ENCODE measurements at regions of chr11 and their contacts with region 1.

Region 1: DNA sequence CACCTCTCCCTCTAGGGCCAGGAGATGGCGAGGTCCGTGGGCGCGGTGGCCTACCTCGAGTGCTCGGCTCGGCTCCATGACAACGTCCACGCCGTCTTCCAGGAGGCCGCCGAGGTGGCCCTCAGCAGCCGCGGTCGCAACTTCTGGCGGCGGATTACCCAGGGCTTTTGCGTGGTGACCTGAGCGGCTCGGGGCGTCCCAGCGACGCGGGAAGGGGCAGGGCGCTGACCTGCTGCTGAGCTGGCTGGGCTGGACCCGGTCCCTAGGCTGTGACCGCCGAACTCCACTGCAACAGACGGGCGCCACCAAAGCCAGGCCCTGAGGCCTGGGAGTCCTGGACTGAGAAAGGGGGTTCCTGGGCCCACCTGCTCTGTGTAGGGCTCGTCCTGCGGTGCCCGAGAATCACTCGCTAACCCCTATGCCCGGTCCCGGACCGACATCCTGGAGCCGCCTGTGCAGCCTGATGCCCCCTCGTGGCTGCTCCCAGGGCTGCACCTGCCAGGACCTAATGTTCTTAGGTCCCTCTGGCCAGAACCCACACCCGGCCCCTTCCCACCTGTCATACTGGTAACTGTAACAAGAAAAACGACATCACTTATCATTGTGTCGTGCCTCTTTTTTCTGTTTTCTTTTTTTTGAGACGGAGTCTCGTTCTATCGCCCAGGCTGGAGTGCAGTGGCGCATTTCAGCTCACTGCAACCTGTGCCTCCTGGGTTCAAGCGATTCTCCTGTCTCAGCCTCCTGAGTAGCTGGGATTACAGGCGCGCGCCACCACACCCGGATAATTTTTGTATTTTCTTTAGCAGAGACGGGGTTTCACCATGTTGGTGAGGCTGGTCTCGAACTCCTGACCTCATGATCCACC is 15.0 kb downstream of the RHOD start:
- DNase-seq: no peak
- H3K4me3 ChIP-seq: no peak overlapping the region
- CTCF ChIP-seq: peak; percentile 93

Region 2: GRCh38 chr11:67053896-67054842 is 17.5 kb before region 1 on chr11:
- CTCF ChIA-PET with region 1: interaction called, 57 read pairs
- POLR2A ChIA-PET with region 1: no interaction called
- DNase-seq: no peak
- H3K4me3 ChIP-seq: no peak overlapping the region
- CTCF ChIP-seq: peak; percentile 93

Region 3: GRCh38 chr11:67082035-67082791 is 10.6 kb after region 1 on chr11:
- CTCF ChIA-PET with region 1: interaction called, 34 read pairs
- POLR2A ChIA-PET with region 1: no interaction called
- DNase-seq: no peak
- H3K4me3 ChIP-seq: no peak overlapping the region
- CTCF ChIP-seq: no peak

Region 4: GRCh38 chr11:67213178-67213621 is 141.5 kb after region 1 on chr11:
- CTCF ChIA-PET with region 1: no interaction called
- POLR2A ChIA-PET with region 1: no interaction called
- DNase-seq: no peak
- H3K4me3 ChIP-seq: no peak overlapping the region
- CTCF ChIP-seq: no peak

Measured in AG04449 (cell line).